HEK293T (cell line): ENCODE measurements at regions of chr1 and their contacts with region 1.

Region 1: DNA sequence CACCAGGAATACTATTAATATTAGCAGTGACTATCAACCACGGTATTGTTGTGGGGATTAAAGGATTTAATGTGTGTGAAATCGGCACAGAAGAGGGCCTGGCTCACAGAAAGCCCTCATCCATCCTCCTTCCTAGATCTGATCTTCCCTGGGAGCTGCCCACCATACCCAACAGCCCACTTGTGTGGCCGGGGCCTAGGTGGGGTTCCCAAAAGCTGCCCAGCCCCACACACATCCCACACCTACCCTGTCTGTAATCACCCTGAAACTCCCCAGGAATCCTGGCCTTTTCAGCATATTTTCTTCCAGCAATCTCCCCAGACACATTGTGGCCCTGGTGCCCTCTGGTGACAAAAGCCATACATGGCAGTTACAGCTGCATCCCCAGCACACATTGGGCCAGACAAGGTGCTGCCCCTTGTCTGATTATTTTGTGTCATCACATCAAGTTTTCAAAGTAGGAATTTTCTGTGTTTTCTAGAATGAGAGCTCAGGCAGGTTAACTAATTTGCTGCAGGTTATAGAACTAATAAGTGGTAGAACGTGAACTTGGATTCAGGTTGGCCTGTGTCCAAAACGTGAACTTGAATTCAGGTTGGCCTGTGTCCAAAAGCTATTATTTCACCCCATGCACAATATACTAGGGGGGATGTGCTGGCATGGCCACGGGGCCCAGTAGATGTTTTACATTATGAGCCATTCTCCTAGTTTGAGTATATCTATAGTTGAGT is 5.3 kb upstream of the SLC6A9 start:
- DNase-seq: peak; percentile 72

Region 2: GRCh38 chr1:44049839-44050238 is 13.3 kb after region 1 on chr1:
- CTCF ChIA-PET with region 1: interaction called, 27 read pairs
- POLR2A ChIA-PET with region 1: no interaction called
- DNase-seq: no peak